H1 (cell line): ENCODE measurements at regions of chr9 and their contacts with region 1.

Region 1: GRCh38 chr9:130682490-130683121 is 11.0 kb upstream of the EXOSC2 start:
- DNase-seq: peak in 1 of 2 experiments; percentile 88
- H3K4me3 ChIP-seq: peak overlapping the region in 3 of 4 experiments; percentile 58 to 68 (median 64); a peak in 7 of 8 replicates
- H3K27ac ChIP-seq: no peak overlapping the region
- H3K4me1 ChIP-seq: peaks cover 0 to 4% (median under 1%) of the 10 kb centered on the region in 4 experiments; a peak in 2 of 7 replicates
- H3K27me3 ChIP-seq: peaks cover 15 to 39% (median 29%) of the 10 kb centered on the region in 4 experiments
- CTCF ChIP-seq: peak; percentile 66 to 90 (median 75)
- EP300 ChIP-seq: no peak
- POLR2A ChIP-seq: no peak
- RAD21 ChIP-seq: peak; percentile 88 to 92

Region 2: DNA sequence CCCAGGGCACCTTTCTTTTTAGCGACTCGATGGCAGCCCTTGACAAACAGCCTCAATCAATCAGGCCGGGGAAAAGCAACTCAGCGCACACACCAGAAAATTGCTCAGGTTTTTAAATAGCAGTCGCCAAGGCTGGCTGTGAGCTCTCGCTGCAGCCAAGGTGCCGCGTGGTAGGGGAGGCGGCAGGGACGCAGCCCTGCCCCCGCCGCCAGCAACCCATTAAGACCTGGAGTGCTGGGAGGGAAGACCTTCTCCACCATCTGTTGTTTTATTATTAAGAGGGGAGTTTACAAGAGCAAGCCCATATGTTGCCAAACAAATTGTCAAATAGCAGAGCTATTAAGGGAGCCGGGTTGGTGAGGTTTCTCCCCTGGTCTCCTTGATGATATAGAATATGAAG is 215.2 kb before region 1 on chr9:
- CTCF ChIA-PET with region 1: interaction called, 89 read pairs
- POLR2A ChIA-PET with region 1: no interaction called
- DNase-seq: no peak
- H3K4me3 ChIP-seq: no peak overlapping the region
- H3K27ac ChIP-seq: no peak overlapping the region
- H3K4me1 ChIP-seq: peaks cover 0 to 11% (median 0%) of the 10 kb centered on the region in 4 experiments; a peak in 3 of 7 replicates
- H3K27me3 ChIP-seq: no peaks in the 10 kb centered on the region
- CTCF ChIP-seq: no peak
- EP300 ChIP-seq: no peak
- POLR2A ChIP-seq: no peak
- RAD21 ChIP-seq: no peak

Region 3: DNA sequence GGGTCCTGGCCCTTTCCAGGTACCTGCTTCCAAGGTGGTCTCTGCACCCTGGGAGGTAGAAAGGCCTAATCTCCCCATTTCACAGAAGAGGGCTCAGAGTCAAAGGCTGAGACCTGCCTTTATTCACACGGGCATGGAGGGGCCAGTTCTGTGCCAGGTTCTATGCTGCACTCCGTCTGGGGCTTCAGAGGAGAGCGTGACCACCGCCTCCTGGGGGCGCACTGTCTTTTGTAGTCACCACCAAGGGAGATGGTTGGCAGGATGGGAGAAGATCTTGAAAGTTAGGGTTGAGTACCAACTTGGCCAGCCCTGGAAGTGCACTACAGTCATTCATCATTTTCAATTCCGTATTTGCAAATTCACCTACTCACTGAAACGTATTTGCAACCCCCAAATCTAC is 41.9 kb before region 1 on chr9:
- CTCF ChIA-PET with region 1: interaction called, 12 read pairs
- POLR2A ChIA-PET with region 1: no interaction called
- DNase-seq: no peak
- H3K4me3 ChIP-seq: no peak overlapping the region
- H3K27ac ChIP-seq: no peak overlapping the region
- H3K4me1 ChIP-seq: peaks cover 0 to 7% (median 4%) of the 10 kb centered on the region in 4 experiments; a peak in 6 of 7 replicates
- H3K27me3 ChIP-seq: peaks cover 0 to 2% (median 0%) of the 10 kb centered on the region in 4 experiments; a peak in 1 of 7 replicates
- CTCF ChIP-seq: peak in 2 of 3 experiments; percentile 29 to 45; a peak in 3 of 4 replicates
- EP300 ChIP-seq: no peak
- POLR2A ChIP-seq: no peak
- RAD21 ChIP-seq: peak; percentile 35 to 45

Region 4: GRCh38 chr9:130663258-130663976 is 19.2 kb before region 1 on chr9:
- CTCF ChIA-PET with region 1: interaction called, 53 read pairs
- POLR2A ChIA-PET with region 1: interaction called, 9 read pairs
- DNase-seq: peak in 1 of 2 experiments; percentile 72
- H3K4me3 ChIP-seq: peak overlapping the region; percentile 31 to 62 (median 33)
- H3K27ac ChIP-seq: no peak overlapping the region
- H3K4me1 ChIP-seq: peaks cover 4 to 45% (median 28%) of the 10 kb centered on the region in 4 experiments
- H3K27me3 ChIP-seq: peaks cover 95 to 100% (median 100%) of the 10 kb centered on the region in 4 experiments
- CTCF ChIP-seq: no peak
- EP300 ChIP-seq: no peak
- POLR2A ChIP-seq: no peak
- RAD21 ChIP-seq: no peak

Region 5: DNA sequence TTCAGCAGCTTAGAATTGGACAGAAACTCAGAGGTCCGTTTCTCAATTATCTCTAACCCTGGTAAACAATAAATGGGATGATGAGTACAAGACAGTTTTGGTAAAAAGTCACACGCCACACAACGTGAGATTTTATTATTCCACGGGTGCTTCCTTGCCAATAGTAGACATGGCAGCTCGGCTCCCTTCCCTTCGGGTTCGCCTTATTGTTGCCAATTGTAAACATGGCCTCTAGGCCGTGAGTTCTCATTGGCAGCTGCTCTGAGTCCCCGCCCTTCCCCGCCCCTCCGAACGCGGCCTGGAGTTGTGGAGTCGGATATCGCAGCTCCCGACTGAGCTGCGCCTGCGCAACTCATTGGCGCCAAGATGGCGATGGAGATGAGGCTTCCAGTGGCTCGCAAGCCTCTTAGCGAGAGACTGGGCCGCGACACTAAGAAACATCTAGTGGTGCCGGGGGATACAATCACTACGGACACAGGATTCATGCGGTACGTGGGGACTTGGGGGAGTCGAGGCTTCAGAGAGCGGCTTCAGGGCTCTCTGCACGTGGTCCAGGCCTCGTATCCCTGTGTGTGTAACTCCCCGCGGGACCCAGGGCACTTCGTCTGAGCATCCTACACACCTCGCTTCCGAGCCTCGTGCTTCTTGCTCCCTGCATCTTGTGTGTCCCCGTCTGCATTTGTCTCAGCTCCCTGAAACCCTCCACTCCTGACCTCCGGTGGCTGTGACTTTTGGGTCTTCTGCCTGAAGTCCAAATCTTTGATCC is 11.0 kb after region 1 on chr9 and contains the start of gene EXOSC2:
- CTCF ChIA-PET with region 1: interaction called, 17 read pairs
- POLR2A ChIA-PET with region 1: interaction called, 11 read pairs
- DNase-seq: peak; percentile 86 to 90
- H3K4me3 ChIP-seq: peak within 1 kb of the TSS; percentile 94 to 100 (median 98)
- H3K27ac ChIP-seq: peak within 1 kb of the TSS; percentile 89
- H3K4me1 ChIP-seq: peaks cover 4 to 9% (median 6%) of the 10 kb centered on the region in 4 experiments; a peak in 6 of 7 replicates
- H3K27me3 ChIP-seq: no peaks in the 10 kb centered on the region
- CTCF ChIP-seq: no peak
- EP300 ChIP-seq: no peak
- POLR2A ChIP-seq: peak; percentile 90 to 92
- RAD21 ChIP-seq: no peak
- total RNA-seq, gene EXOSC2: 84.3 and 93.6 TPM in 2 replicates